OCI-LY7 (cell line): ENCODE measurements at regions of chr10 and their contacts with region 1.

Region 1: DNA sequence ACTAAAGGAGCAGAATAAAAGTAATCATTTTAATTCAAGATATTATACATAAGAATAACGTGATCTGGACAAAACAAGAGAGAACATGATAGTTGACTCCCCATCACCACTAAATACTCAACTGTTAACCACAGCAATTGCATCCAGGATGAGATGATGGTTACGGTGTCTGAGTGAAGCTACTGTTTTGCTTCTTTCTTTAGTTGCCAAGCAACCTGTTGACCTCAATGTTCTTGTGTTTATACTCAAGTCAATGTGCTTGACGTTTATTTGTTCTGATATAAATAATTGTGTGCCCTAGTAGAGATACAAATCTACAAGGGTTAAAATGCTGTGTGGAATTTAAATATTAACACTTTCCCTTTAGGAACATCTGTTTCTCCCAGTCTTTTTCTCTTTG is 31.4 kb upstream of the MPP7 start:
- DNase-seq: peak; percentile 81
- H3K4me3 ChIP-seq: peak overlapping the region; percentile 70
- H3K27ac ChIP-seq: peak overlapping the region; percentile 89
- H3K4me1 ChIP-seq: peaks cover 75% of the 10 kb centered on the region
- CTCF ChIP-seq: no peak

Region 2: GRCh38 chr10:27399871-27400270 is 934.4 kb before region 1 on chr10:
- CTCF ChIA-PET with region 1: no interaction called
- POLR2A ChIA-PET with region 1: no interaction called
- intact Hi-C with region 1: no loop called
- DNase-seq: no peak
- H3K4me3 ChIP-seq: no peak overlapping the region
- H3K27ac ChIP-seq: no peak overlapping the region
- H3K4me1 ChIP-seq: no peaks in the 10 kb centered on the region
- CTCF ChIP-seq: no peak

Region 3: GRCh38 chr10:28284123-28284522 is 50.2 kb before region 1 on chr10:
- CTCF ChIA-PET with region 1: no interaction called
- POLR2A ChIA-PET with region 1: interaction called, 16 read pairs
- intact Hi-C with region 1: no loop called
- DNase-seq: peak; percentile 45
- H3K4me3 ChIP-seq: peak overlapping the region; percentile 3
- H3K27ac ChIP-seq: peak overlapping the region; percentile 97
- H3K4me1 ChIP-seq: peaks cover 76% of the 10 kb centered on the region
- CTCF ChIP-seq: no peak

Region 4: DNA sequence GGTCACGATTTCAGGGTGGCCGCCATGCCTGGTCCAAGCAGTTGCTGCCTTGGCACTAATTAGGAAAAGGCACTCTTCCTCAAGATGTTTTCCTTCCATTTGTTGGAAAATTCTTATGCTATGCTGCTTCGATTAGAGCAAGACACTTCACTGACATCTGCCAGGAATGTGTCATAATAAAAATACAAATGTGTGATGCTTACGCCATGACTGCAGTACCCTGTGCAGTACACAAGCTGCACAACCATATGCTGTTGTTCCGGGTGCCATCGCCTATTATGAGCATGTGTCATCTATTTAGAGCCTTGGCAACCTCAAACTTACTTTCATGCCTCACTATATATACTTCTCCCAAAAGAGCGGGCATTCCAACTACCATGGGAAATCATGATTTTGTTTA is 16.5 kb before region 1 on chr10:
- CTCF ChIA-PET with region 1: interaction called, 3 read pairs
- POLR2A ChIA-PET with region 1: interaction called, 31 read pairs
- intact Hi-C with region 1: no loop called
- DNase-seq: no peak
- H3K4me3 ChIP-seq: no peak overlapping the region
- H3K27ac ChIP-seq: no peak overlapping the region
- H3K4me1 ChIP-seq: no peaks in the 10 kb centered on the region
- CTCF ChIP-seq: no peak

Region 5: GRCh38 chr10:28349892-28350291 is 15.6 kb after region 1 on chr10:
- CTCF ChIA-PET with region 1: no interaction called
- POLR2A ChIA-PET with region 1: interaction called, 11 read pairs
- intact Hi-C with region 1: no loop called
- DNase-seq: no peak
- H3K4me3 ChIP-seq: no peak overlapping the region
- H3K27ac ChIP-seq: no peak overlapping the region
- H3K4me1 ChIP-seq: no peaks in the 10 kb centered on the region
- CTCF ChIP-seq: no peak

Region 6: GRCh38 chr10:28367929-28368484 is 33.7 kb after region 1 on chr10:
- CTCF ChIA-PET with region 1: interaction called, 4 read pairs
- POLR2A ChIA-PET with region 1: interaction called, 47 read pairs
- intact Hi-C with region 1: loop called (anchors 1 kb)
- DNase-seq: peak; percentile 93
- H3K4me3 ChIP-seq: peak overlapping the region; percentile 1
- H3K27ac ChIP-seq: peak overlapping the region; percentile 92
- H3K4me1 ChIP-seq: peaks cover 41% of the 10 kb centered on the region
- CTCF ChIP-seq: no peak

Region 7: GRCh38 chr10:28410420-28411135 is 76.3 kb after region 1 on chr10:
- CTCF ChIA-PET with region 1: no interaction called
- POLR2A ChIA-PET with region 1: no interaction called
- intact Hi-C with region 1: no loop called
- DNase-seq: no peak
- H3K4me3 ChIP-seq: no peak overlapping the region
- H3K27ac ChIP-seq: no peak overlapping the region
- H3K4me1 ChIP-seq: no peaks in the 10 kb centered on the region
- CTCF ChIP-seq: peak; percentile 60

Region 8: DNA sequence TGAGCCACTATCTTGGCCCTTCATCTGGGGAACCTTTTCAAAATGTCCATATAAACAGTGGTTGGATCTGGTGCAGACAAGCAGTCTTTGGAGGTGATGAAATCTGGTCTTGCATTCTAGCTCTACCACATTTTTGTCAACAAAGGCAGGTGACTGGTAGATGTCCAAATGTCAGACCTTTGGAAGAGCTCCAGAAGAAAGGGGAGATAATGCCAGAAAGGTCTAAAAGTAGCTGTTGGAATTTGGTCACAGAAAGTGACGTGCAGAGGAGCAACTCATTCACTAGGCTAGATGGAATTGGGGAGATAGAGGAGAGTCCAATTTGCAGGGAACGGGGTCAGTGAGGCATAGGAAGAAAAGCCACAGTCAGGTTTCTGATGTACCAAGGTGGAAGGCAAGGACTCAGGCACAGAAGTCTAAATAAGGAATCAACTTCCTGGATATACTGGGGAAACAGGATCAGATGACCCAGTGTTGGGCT is 162.2 kb after region 1 on chr10:
- CTCF ChIA-PET with region 1: no interaction called
- POLR2A ChIA-PET with region 1: no interaction called
- intact Hi-C with region 1: no loop called
- DNase-seq: no peak
- H3K4me3 ChIP-seq: no peak overlapping the region
- H3K27ac ChIP-seq: no peak overlapping the region
- H3K4me1 ChIP-seq: no peaks in the 10 kb centered on the region
- CTCF ChIP-seq: no peak